ENCODE measurements at regions of chr15 and their contacts with region 1.

Region 1: GRCh38 chr15:78177447-78177873 is 28.3 kb downstream of the IDH3A start:
- DNase-seq: peak; percentile 36 to 88
- H3K4me3 ChIP-seq: no peak overlapping the region
- H3K27ac ChIP-seq: no peak overlapping the region
- H3K4me1 ChIP-seq: no peaks in the 10 kb centered on the region
- H3K27me3 ChIP-seq: no peaks in the 10 kb centered on the region
- CTCF ChIP-seq: peak; percentile 91 to 96 (median 91)
- EP300 ChIP-seq: no peak
- POLR2A ChIP-seq: no peak
- RAD21 ChIP-seq: peak; percentile 94 to 96

Region 2: GRCh38 chr15:78140292-78140691 is 37.2 kb before region 1 on chr15:
- CTCF ChIA-PET with region 1: interaction called, 17 read pairs
- POLR2A ChIA-PET with region 1: no interaction called
- DNase-seq: no peak
- H3K4me3 ChIP-seq: no peak overlapping the region
- H3K27ac ChIP-seq: no peak overlapping the region
- H3K4me1 ChIP-seq: no peaks in the 10 kb centered on the region
- H3K27me3 ChIP-seq: no peaks in the 10 kb centered on the region
- CTCF ChIP-seq: no peak
- EP300 ChIP-seq: no peak
- POLR2A ChIP-seq: no peak
- RAD21 ChIP-seq: no peak

Region 3: GRCh38 chr15:78167227-78167888 is 10.1 kb before region 1 on chr15:
- CTCF ChIA-PET with region 1: interaction called, 24 read pairs
- POLR2A ChIA-PET with region 1: interaction called, 3 read pairs
- DNase-seq: no peak
- H3K4me3 ChIP-seq: no peak overlapping the region
- H3K27ac ChIP-seq: no peak overlapping the region
- H3K4me1 ChIP-seq: no peaks in the 10 kb centered on the region
- H3K27me3 ChIP-seq: no peaks in the 10 kb centered on the region
- CTCF ChIP-seq: no peak
- EP300 ChIP-seq: no peak
- POLR2A ChIP-seq: no peak
- RAD21 ChIP-seq: no peak

Region 4: DNA sequence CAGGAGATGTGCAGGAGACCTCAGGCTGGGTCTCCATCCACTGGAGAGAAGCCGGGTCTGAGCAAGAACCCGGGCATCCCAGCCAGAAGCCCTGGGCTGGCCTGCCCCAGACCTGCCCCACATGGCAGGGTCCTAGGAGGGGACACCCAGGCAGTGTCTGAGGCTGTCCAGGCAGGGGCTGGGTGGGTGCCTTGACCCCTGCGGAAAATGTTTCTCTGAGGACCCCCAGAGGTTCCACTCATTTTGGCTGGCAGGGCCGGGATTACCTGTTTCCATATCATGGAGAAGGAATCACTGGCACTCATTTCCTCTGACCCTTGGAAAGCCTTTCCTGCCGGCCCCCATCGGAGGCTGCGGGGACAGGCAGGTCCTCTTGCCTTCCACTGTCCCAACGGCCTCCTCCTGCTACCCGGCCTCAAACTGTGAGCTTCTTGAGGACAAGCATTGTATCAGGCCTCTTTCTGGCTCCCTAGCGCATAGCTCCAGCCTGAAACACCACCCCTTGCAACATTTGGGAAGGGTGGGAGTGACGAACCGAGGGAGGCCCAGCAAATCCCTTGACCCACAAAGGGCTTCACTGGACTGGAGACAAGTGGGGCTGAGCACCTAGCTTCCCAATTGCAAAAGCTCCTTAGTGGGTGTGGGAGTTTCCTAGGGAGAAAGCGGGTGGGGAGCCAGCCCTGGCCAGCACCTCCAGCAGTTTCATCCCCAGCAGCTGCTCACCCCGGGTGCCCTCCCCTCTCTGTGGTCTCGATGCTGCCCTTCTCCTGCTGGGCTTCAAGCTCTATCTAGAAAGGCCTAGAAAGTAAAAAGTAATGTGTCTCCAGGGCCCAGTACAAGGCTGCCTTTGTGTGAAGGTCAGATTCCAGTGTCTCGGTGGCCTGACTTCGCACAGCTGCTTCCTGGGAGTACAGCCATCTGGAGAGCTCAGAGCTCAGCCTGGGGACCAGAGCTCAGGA is 27.2 kb after region 1 on chr15:
- CTCF ChIA-PET with region 1: interaction called, 239 read pairs
- POLR2A ChIA-PET with region 1: no interaction called
- DNase-seq: peak in 1 of 2 experiments; percentile 39
- H3K4me3 ChIP-seq: no peak overlapping the region
- H3K27ac ChIP-seq: no peak overlapping the region
- H3K4me1 ChIP-seq: no peaks in the 10 kb centered on the region; a peak in 1 of 7 replicates
- H3K27me3 ChIP-seq: no peaks in the 10 kb centered on the region
- CTCF ChIP-seq: no peak
- EP300 ChIP-seq: no peak
- POLR2A ChIP-seq: no peak
- RAD21 ChIP-seq: no peak

Region 5: GRCh38 chr15:78264304-78265136 is 87.1 kb after region 1 on chr15 and contains the start of gene DNAJA4:
- CTCF ChIA-PET with region 1: interaction called, 11 read pairs
- POLR2A ChIA-PET with region 1: no interaction called
- DNase-seq: peak in 1 of 2 experiments; percentile 68
- H3K4me3 ChIP-seq: peak within 1 kb of the TSS; percentile 29 to 59 (median 32)
- H3K27ac ChIP-seq: no peak within 1 kb of the TSS
- H3K4me1 ChIP-seq: 0 out of 7 replicates have a peak, but pooled peaks cover 0 to 3% (median 0%) of the 10 kb centered on the region in 4 experiments
- H3K27me3 ChIP-seq: peaks cover 0 to 19% (median 10%) of the 10 kb centered on the region in 4 experiments; a peak in 4 of 7 replicates
- CTCF ChIP-seq: peak in 1 of 3 experiments; percentile 2; a peak in 1 of 4 replicates
- EP300 ChIP-seq: no peak
- POLR2A ChIP-seq: no peak
- RAD21 ChIP-seq: no peak
- total RNA-seq, gene DNAJA4: 2.5 and 3.6 TPM in 2 replicates

Region 6: DNA sequence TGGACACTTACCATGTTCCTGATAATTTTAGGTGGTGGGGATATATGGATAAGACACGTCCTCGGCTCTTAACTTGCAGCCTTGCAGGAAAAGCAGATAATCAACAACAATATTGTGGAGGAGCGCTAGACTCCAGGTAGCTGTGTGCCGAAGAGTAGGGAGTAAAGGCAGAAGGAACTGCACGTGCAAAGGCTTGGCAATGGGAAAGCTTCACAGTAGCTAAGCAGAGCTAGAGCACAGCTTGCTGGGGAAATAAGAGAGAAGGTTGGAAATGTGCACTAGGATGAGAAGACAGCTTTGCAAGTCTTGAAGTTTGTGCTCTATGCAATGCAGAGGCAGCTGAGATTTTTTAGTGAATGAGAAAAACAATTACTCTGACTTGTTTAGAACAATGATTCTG is 375.1 kb after region 1 on chr15:
- CTCF ChIA-PET with region 1: no interaction called
- POLR2A ChIA-PET with region 1: no interaction called
- DNase-seq: no peak
- H3K4me3 ChIP-seq: no peak overlapping the region
- H3K27ac ChIP-seq: no peak overlapping the region
- H3K4me1 ChIP-seq: no peaks in the 10 kb centered on the region
- H3K27me3 ChIP-seq: no peaks in the 10 kb centered on the region
- CTCF ChIP-seq: no peak
- EP300 ChIP-seq: no peak
- POLR2A ChIP-seq: no peak
- RAD21 ChIP-seq: no peak